Activated CD4-positive, alpha-beta T cell treated with anti-CD3 and anti-CD28 coated beads for 36 hours (primary cell): ENCODE measurements at regions of chr2 and their contacts with region 1.

Region 1: DNA sequence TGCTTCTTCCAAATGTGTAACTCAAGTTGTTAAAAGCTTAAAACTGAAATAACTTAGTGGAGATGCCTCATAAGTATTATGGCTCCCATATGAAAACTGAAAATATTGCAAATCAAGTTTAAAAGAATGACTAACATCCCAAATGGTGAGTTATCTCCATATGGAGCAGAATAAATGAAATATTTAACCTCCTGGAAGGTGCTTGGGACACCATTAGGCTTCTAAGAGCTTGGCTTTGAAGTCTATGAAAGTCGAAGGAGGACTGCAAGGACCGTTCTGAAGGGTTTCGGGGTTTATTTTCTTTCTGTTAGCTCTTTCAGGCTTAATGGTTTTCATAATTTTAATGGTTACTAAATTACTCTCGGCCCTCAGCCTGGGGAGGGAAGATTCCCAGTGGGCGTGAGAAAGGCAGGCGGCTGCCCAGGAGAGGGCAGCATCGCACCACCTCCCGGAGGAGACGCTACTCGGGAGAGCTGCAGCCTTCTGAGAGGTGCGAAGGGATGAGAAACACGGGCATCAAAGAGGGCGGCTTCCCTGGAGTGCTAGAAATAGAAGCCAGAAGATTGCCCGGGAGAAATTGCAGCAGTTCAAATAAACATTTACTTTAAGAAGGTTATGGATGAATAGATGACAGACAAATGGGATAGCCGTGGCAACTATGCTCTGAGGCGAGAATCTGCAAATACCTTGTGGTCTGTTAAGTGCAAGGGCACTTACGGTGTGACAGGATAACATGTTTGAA is 43.1 kb downstream of the MAP3K19 start:
- DNase-seq: peak; percentile 85
- ATAC-seq: peak; percentile 96
- H3K4me3 Mint-ChIP-seq: no peak overlapping the region
- H3K27ac Mint-ChIP-seq: no peak overlapping the region
- H3K4me1 Mint-ChIP-seq: peaks cover 4% of the 10 kb centered on the region
- H3K27me3 Mint-ChIP-seq: peaks cover 11% of the 10 kb centered on the region

Region 2: DNA sequence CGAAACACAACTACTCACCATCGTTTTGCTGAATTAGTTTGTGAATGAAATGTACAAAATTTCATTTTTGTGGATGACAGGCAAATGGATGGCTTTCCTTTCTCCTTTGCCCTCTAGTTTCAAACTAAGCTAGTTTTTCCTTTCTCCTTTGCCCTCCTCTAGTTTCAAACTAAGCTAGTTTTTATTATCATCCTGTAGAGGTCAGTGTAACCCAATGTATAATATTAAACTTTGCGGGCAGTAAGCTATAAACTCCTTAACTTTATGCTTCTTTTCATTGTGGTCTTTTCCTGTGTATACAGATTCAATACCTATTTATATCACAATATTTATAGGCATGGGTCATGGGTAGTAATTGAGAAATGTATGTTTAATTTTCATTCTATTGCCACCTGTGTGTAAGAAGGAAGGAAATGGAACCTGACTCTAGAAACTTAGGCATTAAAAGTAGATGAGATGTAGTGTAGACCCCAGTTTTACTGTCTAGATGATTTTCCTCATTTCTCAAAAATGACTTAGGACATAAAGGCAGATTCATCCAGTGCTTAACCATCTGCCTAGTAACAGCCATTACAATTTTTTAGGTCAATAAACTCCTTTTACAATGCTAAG is 15.1 kb before region 1 on chr2:
- CTCF ChIA-PET with region 1: interaction called, 25 read pairs
- POLR2A ChIA-PET with region 1: no interaction called
- intact Hi-C with region 1: no loop called
- DNase-seq: no peak
- ATAC-seq: no peak
- H3K4me3 Mint-ChIP-seq: no peak overlapping the region
- H3K27ac Mint-ChIP-seq: no peak overlapping the region
- H3K4me1 Mint-ChIP-seq: no peaks in the 10 kb centered on the region
- H3K27me3 Mint-ChIP-seq: peaks cover 2% of the 10 kb centered on the region

Region 3: DNA sequence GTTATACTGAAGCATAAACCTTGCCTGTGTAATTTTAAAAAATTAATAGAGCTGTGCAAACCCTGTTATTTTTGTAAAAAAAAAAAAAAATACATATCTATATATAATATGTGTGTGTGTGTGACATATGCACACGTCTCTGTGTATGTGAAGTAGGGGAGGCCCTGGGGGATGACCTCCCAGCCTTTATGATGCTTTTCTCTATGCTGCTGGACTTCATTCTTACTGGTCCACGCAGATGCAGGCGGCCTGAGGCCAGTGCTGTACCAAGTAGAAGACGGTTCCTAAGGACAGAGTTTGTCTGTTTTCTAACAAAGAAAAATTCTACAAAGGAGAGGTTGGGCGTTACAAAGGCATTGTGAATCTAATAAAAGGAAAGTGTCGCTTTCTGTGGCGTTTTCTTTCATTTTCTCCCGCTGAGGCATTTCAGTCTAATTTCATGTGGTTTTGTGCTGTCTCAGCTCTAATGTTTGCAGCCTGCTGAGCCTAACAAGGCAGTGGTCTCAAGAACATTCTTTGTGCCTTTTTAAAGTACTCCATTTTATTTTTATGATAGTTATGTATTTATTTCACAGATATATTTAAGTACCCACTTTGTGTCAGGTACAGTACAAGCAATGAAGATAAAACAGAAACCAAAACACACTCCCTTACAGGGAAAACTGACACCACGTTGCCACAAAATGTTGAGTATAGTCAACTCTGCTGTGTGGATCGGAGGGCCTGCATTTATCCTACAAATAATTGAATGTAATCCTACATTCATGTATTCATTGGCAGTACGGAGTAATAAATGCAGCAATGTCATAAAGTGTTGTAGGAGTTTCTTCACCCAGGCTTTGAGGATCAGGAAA is 166.0 kb after region 1 on chr2:
- CTCF ChIA-PET with region 1: interaction called, 3 read pairs
- POLR2A ChIA-PET with region 1: no interaction called
- intact Hi-C with region 1: loop called in 1 of 2 experiments (anchors 5 kb)
- DNase-seq: no peak
- ATAC-seq: peak; percentile 53
- H3K4me3 Mint-ChIP-seq: no peak overlapping the region
- H3K27ac Mint-ChIP-seq: peak overlapping the region; percentile 21
- H3K4me1 Mint-ChIP-seq: peaks cover 4% of the 10 kb centered on the region
- H3K27me3 Mint-ChIP-seq: no peaks in the 10 kb centered on the region

Region 4: GRCh38 chr2:135473567-135473966 is 469.4 kb after region 1 on chr2:
- CTCF ChIA-PET with region 1: interaction called, 3 read pairs
- POLR2A ChIA-PET with region 1: no interaction called
- intact Hi-C with region 1: loop called in 1 of 2 experiments (anchors 10 kb)
- DNase-seq: peak; percentile 50
- ATAC-seq: peak; percentile 42
- H3K4me3 Mint-ChIP-seq: no peak overlapping the region
- H3K27ac Mint-ChIP-seq: no peak overlapping the region
- H3K4me1 Mint-ChIP-seq: peaks cover 2% of the 10 kb centered on the region
- H3K27me3 Mint-ChIP-seq: no peaks in the 10 kb centered on the region

Region 5: DNA sequence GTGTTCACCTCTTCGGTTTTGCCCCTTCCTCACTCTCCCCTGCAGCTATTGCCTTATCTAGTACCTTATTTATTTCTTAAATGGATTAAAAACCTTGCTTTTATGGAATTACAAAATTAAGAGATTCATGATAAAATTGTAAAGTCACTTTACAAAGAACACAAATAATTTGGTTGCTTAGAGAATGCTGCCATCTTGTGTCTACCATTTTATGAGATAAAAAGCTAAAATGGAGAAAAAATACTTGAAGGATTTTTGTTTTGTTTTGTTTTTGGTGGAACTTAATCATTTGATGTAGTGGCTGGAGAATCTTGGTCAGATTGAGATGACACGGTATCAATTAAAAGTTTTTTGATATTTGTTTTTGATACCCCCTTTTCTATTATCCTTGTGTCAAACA is 596.7 kb after region 1 on chr2:
- CTCF ChIA-PET with region 1: interaction called, 4 read pairs
- POLR2A ChIA-PET with region 1: no interaction called
- intact Hi-C with region 1: loop called (anchors 1 to 2 kb)
- DNase-seq: no peak
- ATAC-seq: no peak
- H3K4me3 Mint-ChIP-seq: no peak overlapping the region
- H3K27ac Mint-ChIP-seq: no peak overlapping the region
- H3K4me1 Mint-ChIP-seq: no peaks in the 10 kb centered on the region
- H3K27me3 Mint-ChIP-seq: no peaks in the 10 kb centered on the region

Region 6: DNA sequence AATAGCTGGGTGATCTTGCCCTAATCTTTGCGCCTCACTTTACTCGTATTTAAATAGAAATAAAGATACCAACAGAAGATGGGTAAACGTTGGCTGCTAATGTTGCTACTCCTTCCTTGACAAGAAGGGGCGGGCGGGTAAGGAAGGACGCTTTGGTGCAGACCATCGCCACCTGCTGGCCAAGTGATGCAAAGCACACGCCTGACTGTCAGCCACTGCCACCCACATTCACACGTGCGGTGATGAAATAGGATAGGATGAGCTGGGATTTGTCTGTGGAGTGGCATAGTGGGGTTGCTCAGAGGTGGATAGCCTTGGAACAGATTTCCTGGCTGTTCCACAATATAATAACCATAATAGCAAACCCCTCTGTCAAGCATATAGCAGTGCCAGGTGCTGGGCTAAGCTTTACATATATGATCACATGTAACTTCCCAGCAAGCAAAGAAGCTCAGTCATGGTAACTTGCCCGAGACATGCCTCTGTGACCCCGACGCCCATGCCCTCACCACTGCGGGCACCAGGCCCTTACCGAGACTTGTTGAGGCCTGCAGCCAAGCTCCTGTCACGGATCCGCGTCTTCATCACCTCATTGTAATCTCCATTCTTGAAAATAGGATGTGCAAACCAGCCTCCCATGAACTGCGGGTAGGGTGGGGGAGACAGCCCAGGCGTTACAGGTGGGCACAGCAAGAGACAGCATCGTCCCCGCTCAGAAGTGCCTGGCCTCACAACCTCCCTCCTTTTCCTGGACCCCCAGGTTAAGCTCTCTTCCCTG is 793.5 kb after region 1 on chr2:
- CTCF ChIA-PET with region 1: interaction called, 10 read pairs
- POLR2A ChIA-PET with region 1: no interaction called
- intact Hi-C with region 1: loop called in 1 of 2 experiments (anchors 1 kb)
- DNase-seq: peak; percentile 92
- ATAC-seq: peak; percentile 86
- H3K4me3 Mint-ChIP-seq: no peak overlapping the region
- H3K27ac Mint-ChIP-seq: no peak overlapping the region
- H3K4me1 Mint-ChIP-seq: peaks cover 21% of the 10 kb centered on the region
- H3K27me3 Mint-ChIP-seq: no peaks in the 10 kb centered on the region